HCT116 (cell line): ENCODE measurements at regions of chr10 and their contacts with region 1.

Region 1: DNA sequence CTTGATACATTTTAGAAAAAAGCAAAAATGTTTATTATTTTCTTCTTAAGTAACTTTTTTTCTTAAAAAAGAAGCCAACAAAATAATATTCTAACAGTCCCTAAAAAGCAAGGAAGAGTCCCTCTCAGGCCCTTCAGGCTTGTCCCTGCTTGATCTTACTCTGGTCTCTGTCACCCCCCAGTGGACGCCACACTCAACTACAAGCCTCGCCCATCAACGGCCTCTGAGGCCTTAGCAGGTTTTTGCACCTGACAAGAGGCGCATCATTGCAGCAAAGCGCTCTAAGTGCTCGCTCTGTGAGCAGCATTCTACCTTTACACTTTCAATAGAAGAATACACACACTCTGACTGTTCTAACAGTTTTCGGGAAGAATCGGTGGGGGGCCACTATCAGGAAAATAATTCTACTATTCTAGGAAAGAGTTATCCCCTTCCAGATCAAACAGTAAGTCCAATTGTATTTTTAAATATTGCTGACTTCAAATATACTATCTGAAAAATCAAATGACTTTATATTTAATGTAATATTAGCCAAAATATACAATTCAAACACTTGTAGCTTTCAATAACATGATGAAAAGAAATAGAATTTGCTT is 139.2 kb downstream of the USP6NL start:
- DNase-seq: peak; percentile 37
- ATAC-seq: peak; percentile 96
- H3K4me3 ChIP-seq: no peak overlapping the region
- H3K27ac ChIP-seq: no peak overlapping the region
- H3K4me1 ChIP-seq: no peaks in the 10 kb centered on the region
- H3K27me3 ChIP-seq: no peaks in the 10 kb centered on the region
- CTCF ChIP-seq: peak; percentile 45 to 83 (median 82); a peak in 5 of 6 replicates
- POLR2A ChIP-seq: no peak
- RAD21 ChIP-seq: peak; percentile 70

Region 2: GRCh38 chr10:11424456-11425297 is 47.6 kb before region 1 on chr10:
- CTCF ChIA-PET with region 1: no interaction called
- POLR2A ChIA-PET with region 1: no interaction called
- RAD21 ChIA-PET with region 1: no interaction called
- intact Hi-C with region 1: loop called (anchors 1 kb)
- DNase-seq: peak; percentile 41
- ATAC-seq: peak; percentile 98
- H3K4me3 ChIP-seq: no peak overlapping the region
- H3K27ac ChIP-seq: no peak overlapping the region
- H3K4me1 ChIP-seq: no peaks in the 10 kb centered on the region
- H3K27me3 ChIP-seq: no peaks in the 10 kb centered on the region
- CTCF ChIP-seq: peak; percentile 61 to 95 (median 87); a peak in 5 of 6 replicates
- POLR2A ChIP-seq: no peak
- RAD21 ChIP-seq: peak; percentile 77